Ascending aorta (tissue), 2 donors: ENCODE measurements at regions of chr14 and their contacts with region 1.

Region 1: GRCh38 chr14:96501742-96502617 is at the start of gene PAPOLA:
- DNase-seq: peak; percentile 82 to 97
- H3K4me3 ChIP-seq: peak within 1 kb of the TSS; percentile 90 to 94
- H3K27ac ChIP-seq: peak within 1 kb of the TSS; percentile 90 to 97
- H3K4me1 ChIP-seq: peaks cover 7 to 15% of the 10 kb centered on the region in 2 donors
- H3K27me3 ChIP-seq: no peaks in the 10 kb centered on the region
- CTCF ChIP-seq: no peak
- total RNA-seq, gene PAPOLA: 64.2 TPM

Region 2: GRCh38 chr14:95534299-95535225 is 967.4 kb before region 1 on chr14 and contains the start of gene GLRX5:
- intact Hi-C with region 1: loop called (anchors 10 kb)
- DNase-seq: peak; percentile 100
- H3K4me3 ChIP-seq: peak within 1 kb of the TSS; percentile 75 to 85
- H3K27ac ChIP-seq: peak within 1 kb of the TSS; percentile 76 to 84
- H3K4me1 ChIP-seq: peaks cover 26 to 46% of the 10 kb centered on the region in 2 donors
- H3K27me3 ChIP-seq: no peaks in the 10 kb centered on the region
- CTCF ChIP-seq: peak in 1 of 3 experiments; percentile 29
- total RNA-seq, gene GLRX5: 24.6 TPM

Region 3: DNA sequence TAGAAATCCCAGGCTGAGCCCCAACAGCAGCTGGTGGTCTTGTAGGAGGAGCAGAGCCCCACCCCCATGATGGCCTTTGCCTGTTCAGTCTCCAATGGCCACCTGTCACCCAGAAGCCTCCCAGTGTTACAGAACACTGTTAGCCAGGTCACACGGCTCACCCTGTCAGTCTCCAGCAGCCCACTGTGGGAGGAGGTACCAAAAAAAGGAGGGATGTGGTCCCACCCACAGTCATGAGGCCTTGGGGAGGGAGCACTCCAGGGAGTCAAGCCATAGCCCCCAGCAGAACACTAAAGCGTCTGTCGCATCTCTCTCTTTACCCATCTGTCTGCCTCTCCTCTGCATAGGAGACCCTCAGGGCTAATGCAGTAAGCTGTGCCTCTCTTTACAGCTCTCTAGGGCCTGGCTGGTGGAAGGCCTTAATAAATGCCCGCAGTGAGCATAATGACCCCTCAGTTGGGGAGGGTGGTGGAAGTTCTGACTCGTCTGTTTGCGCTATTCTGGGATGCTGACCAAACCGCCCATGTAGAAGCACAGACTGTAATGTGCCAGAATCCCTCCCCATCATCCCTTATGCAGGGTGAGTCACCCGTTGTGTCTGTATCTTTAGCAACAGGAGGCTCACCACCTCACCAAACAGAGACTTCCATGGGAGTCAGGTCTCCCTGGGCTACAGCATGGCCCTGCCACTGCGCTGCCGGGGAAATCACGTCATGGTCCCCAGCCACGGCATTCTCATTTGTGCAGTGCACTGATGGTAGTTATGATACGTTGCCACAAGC is 448.2 kb before region 1 on chr14:
- intact Hi-C with region 1: loop called (anchors 5 kb)
- DNase-seq: peak; percentile 87 to 96
- H3K4me3 ChIP-seq: peak overlapping the region in 1 of 2 donors; percentile 14
- H3K27ac ChIP-seq: peak overlapping the region; percentile 81 to 93
- H3K4me1 ChIP-seq: peaks cover 15 to 34% of the 10 kb centered on the region in 2 donors
- H3K27me3 ChIP-seq: no peaks in the 10 kb centered on the region
- CTCF ChIP-seq: no peak

Region 4: DNA sequence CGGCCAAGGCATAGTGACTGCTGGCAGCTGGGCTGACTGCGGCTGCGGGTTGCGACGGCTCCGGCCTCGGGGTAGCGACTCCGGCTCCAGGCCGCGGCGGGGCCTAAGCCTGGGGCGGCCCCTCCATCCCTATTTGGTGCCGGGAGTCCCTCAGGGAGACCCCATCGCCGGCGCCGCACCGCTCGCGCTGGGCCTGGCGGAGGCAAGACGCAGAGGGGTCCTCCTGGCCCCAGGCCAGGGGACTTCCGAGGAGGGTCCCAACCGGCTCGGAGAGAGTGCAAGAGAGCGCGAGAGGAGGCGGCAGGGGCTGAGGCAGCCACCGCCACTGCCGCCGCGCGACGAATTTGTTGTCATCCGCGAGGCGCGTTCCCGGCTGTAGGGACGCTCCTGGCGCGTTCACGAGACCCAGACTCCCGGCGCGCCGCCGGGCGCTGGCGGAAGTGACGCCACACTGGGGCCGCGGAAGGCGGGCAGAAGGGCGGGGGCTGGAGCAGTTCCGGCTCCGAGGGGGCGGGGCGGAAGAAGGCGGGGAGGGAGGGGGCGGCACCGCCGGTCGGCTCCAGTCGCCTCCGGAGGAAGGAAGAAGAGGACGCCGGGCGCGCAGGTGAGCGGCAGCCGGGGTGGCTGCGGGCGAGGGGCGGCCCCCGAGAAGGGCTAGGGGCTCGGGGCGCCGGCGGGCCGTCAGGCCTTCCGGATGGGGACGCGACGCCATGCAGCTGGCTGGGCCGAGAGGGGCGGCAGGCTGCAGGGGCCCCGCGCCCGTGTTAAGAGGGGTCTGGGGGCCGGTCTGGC is 138.8 kb before region 1 on chr14 and contains the starts of genes ATG2B and GSKIP:
- intact Hi-C with region 1: loop called (anchors 1 kb)
- DNase-seq: peak; percentile 68 to 95
- H3K4me3 ChIP-seq: peak within 1 kb of the TSS; percentile 87 to 92
- H3K27ac ChIP-seq: peak within 1 kb of the TSS; percentile 92 to 93
- H3K4me1 ChIP-seq: peaks cover 9 to 17% of the 10 kb centered on the region in 2 donors
- H3K27me3 ChIP-seq: no peaks in the 10 kb centered on the region
- CTCF ChIP-seq: no peak
- total RNA-seq, gene ATG2B: 15.8 TPM
- total RNA-seq, gene GSKIP: 17.5 TPM

Region 5: DNA sequence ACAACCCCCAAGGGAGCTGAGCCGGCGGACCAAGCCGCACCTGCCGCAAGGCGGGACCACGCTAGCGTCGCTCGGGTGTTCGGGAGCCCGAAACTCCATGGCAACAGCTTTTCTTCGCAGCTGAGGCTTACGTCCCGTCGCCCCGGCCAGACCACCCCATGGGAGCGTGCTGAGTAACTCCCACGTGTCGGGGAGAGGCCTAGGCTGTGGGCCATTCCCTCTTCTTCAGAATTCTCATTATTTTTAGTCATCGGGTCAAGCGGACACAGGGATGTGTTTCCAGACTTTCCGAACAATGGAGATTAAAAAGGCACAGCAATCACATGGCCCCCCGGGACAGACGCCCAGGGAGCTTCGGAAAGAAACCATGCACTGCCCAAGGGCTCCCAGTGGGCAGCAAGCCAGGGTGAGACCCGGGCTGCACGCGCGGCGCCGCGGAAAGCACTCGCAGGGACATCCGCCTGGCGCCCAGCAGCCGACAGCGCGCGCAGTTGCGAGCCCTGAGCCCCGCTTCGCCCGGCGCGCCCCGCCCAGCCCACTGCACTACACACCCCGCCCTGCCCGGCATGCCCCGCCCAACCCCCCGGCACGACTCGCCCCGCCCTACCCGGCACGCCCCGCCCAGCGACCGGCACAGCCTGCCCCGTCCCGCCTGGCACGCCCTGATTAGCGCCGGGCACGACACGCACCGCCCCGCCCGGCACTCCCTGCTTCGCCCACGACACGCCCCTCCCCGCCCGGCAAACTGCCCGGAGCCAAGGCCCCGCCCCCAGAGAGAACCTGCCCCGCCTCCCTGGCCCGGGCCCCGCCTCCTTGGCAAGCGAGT is 110.5 kb before region 1 on chr14:
- intact Hi-C with region 1: loop called (anchors 1 kb)
- DNase-seq: peak; percentile 82 to 98
- H3K4me3 ChIP-seq: peak overlapping the region; percentile 41 to 77
- H3K27ac ChIP-seq: peak overlapping the region; percentile 49 to 62
- H3K4me1 ChIP-seq: peaks cover 3 to 6% of the 10 kb centered on the region in 2 donors
- H3K27me3 ChIP-seq: no peaks in the 10 kb centered on the region
- CTCF ChIP-seq: no peak

Region 6: DNA sequence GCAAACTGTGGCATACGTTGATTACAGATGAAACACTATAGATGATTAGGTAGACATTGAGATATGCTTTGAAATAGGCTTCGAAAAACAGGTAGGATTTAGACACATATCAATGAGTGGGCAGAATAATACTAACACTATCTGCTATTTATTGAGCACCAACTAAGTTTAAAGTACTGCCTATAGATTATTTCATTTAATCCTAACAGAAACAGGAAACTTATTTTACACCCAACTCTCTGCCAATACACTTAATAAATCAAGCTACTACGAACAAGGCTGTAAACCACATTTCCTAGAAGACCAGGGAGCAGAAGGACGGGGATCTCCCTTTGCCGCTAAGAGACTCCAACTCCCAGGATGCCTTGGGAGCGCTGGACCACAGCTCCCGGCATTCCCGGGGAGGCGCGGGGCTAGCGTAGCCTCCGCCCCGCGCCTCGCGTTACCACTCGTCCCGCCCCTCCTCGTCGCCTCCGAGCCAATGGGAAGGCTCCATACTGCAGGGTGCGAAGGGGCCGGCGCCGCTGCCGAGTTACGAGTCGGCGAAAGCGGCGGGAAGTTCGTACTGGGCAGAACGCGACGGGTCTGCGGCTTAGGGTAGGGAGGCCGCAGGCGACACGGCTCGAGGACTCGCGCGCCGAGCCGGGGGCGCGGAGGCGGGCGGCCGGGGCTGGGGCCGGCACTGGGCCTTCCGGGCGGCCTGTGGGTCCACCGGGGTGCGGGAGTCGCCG is 295.0 kb after region 1 on chr14 and contains the start of gene VRK1:
- intact Hi-C with region 1: loop called (anchors 5 kb)
- DNase-seq: peak; percentile 83 to 96
- H3K4me3 ChIP-seq: peak within 1 kb of the TSS; percentile 66 to 80
- H3K27ac ChIP-seq: no peak within 1 kb of the TSS
- H3K4me1 ChIP-seq: peaks cover 5 to 9% of the 10 kb centered on the region in 2 donors
- H3K27me3 ChIP-seq: no peaks in the 10 kb centered on the region
- CTCF ChIP-seq: no peak
- total RNA-seq, gene VRK1: 2.4 TPM

Region 7: DNA sequence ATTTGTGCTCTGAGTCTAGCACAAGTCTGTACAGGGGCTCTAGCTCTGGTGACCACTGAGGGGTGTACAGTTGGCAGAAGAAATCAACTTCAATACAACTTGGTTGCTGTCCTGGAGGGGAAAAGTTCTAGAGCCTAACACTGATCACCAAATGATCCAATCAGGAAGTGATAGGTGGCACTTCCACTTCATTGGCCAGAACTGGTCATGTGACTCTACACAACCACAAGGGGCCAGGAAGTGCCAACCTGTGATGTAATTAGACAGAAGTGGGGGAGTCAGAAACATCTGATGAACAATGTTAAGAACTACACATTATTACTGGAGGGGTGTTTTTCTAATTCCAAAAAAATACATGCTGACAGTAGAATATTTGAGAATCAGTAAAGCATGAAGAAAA is 696.8 kb after region 1 on chr14:
- intact Hi-C with region 1: no loop called
- DNase-seq: no peak
- H3K4me3 ChIP-seq: no peak overlapping the region
- H3K27ac ChIP-seq: no peak overlapping the region
- H3K4me1 ChIP-seq: no peaks in the 10 kb centered on the region
- H3K27me3 ChIP-seq: no peaks in the 10 kb centered on the region
- CTCF ChIP-seq: no peak